T-cell (primary cell): ENCODE measurements at regions of chr4 and their contacts with region 1.

Region 1: GRCh38 chr4:154551872-154552686 is 1.9 kb upstream of the PLRG1 start:
- DNase-seq: peak; percentile 39 to 84 (median 59)
- ATAC-seq: peak; percentile 39 to 41 (median 40)
- H3K4me3 ChIP-seq: no peak overlapping the region
- H3K4me3 Mint-ChIP-seq: no peak overlapping the region
- H3K27ac ChIP-seq: no peak overlapping the region
- H3K27ac Mint-ChIP-seq: no peak overlapping the region
- H3K4me1 ChIP-seq: peaks cover 14 to 20% of the 10 kb centered on the region in 2 experiments
- H3K4me1 Mint-ChIP-seq: peaks cover 21 to 33% (median 31%) of the 10 kb centered on the region in 3 donors
- H3K27me3 ChIP-seq: no peaks in the 10 kb centered on the region
- H3K27me3 Mint-ChIP-seq: peaks cover 0 to under 1% of the 10 kb centered on the region in 2 donors

Region 2: DNA sequence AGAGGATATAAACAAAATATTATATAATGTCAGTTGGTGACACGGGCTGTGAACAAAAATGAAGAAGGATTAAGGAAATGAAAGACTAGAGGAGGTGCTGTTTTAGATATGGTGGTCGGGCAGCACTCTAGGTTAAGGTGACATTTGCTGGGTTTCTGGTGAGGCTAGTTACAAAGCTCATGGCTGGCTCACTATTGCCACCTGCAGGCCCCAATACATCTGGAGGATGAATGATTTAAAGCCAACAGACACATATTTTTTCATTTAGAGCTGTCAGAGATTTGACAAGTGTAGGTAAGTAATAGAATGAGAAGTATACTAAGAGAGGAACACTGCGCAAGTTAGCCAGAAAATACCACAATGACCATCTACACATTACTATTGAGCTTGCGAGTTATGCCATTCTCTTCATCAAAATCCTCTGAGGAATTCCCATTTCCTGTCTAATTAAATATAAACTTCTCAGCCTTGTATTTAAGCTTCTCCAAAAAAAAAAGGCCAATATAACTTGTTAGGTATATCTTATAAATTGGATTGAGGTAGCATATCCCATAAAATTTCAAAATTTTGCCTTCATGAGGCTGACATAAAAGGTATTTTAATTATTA is 66.7 kb after region 1 on chr4:
- CTCF ChIA-PET with region 1: interaction called, 11 to 70 read pairs
- POLR2A ChIA-PET with region 1: interaction called in 1 of 2 experiments, 6 read pairs
- DNase-seq: peak in 32 of 35 experiments; percentile 9 to 59 (median 30)
- ATAC-seq: peak in 3 of 4 experiments; percentile 36 to 62 (median 42)
- H3K4me3 ChIP-seq: no peak overlapping the region
- H3K4me3 Mint-ChIP-seq: no peak overlapping the region
- H3K27ac ChIP-seq: no peak overlapping the region
- H3K27ac Mint-ChIP-seq: no peak overlapping the region
- H3K4me1 ChIP-seq: no peaks in the 10 kb centered on the region
- H3K4me1 Mint-ChIP-seq: peaks cover 7 to 11% (median 10%) of the 10 kb centered on the region in 3 donors
- H3K27me3 ChIP-seq: no peaks in the 10 kb centered on the region
- H3K27me3 Mint-ChIP-seq: peaks cover 2 to 3% of the 10 kb centered on the region in 2 donors

Region 3: GRCh38 chr4:155376387-155377268 is 824.5 kb after region 1 on chr4 and contains the start of gene MAP9:
- CTCF ChIA-PET with region 1: interaction called, 3 to 62 read pairs
- POLR2A ChIA-PET with region 1: interaction called in 1 of 2 experiments, 20 read pairs
- DNase-seq: peak; percentile 62 to 95 (median 88)
- ATAC-seq: peak; percentile 91 to 95 (median 92)
- H3K4me3 ChIP-seq: peak within 1 kb of the TSS; percentile 67 to 94
- H3K4me3 Mint-ChIP-seq: peak within 1 kb of the TSS; percentile 86 to 90 (median 90)
- H3K27ac ChIP-seq: peak within 1 kb of the TSS; percentile 89
- H3K27ac Mint-ChIP-seq: peak within 1 kb of the TSS; percentile 87 to 89
- H3K4me1 ChIP-seq: peaks cover 0 to 6% of the 10 kb centered on the region in 2 experiments
- H3K4me1 Mint-ChIP-seq: peaks cover 6 to 21% (median 18%) of the 10 kb centered on the region in 3 donors
- H3K27me3 ChIP-seq: peaks cover 0 to 3% of the 10 kb centered on the region in 2 experiments
- H3K27me3 Mint-ChIP-seq: no peaks in the 10 kb centered on the region
- total RNA-seq, gene MAP9: 5.1 to 17.3 (median 6.6) TPM